ENCODE measurements at regions of chr5 and their contacts with region 1.

Region 1: DNA sequence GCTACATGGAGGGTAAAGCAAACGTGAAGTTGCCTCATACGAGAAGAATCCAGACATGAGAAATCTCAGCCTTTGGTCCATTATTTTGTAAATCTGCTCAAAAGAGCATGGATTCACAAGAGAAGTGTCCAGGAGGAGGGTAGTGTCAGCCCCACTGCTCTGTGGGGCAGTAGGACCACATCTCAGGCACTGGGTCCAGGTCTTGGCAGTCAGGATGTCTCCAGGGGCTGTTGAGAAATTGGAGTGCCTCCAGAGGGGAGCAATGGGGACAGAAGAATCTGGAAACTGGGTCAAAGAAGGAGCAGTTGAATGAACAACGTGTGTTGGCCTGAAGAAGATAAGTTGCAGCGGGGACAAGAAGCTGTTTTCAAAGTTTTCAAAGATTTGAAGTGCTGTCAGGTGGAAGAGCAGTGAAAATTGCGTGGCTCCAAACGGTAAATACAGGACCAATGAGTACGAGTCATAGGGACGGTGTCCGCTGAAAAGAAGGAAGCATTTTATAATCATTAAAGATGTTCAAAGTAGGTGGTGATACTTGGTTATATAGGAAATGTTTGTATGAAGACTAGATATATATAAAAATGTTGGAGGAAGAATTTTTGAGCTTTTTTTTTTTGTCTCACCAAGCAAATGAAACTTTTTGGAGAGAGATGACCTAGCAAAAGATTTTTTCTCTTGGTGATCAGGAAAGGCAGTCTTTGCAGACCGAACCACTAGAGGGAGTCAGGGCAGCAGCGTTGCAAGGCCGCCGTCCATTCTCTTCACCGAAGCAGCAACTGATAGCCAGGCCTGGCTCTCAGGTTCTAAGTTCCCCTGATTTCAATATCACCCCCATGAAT is 57.1 kb upstream of the ZBED3 start:
- DNase-seq: peak; percentile 55 to 70
- ATAC-seq: peak in 7 of 8 donors; percentile 73 to 85 (median 82)
- H3K4me3 ChIP-seq: no peak overlapping the region
- H3K27ac ChIP-seq: no peak overlapping the region
- H3K4me1 ChIP-seq: peaks cover 0 to 31% (median 0%) of the 10 kb centered on the region in 9 donors
- H3K27me3 ChIP-seq: no peaks in the 10 kb centered on the region
- CTCF ChIP-seq: peak; percentile 57 to 92 (median 84)

Region 2: DNA sequence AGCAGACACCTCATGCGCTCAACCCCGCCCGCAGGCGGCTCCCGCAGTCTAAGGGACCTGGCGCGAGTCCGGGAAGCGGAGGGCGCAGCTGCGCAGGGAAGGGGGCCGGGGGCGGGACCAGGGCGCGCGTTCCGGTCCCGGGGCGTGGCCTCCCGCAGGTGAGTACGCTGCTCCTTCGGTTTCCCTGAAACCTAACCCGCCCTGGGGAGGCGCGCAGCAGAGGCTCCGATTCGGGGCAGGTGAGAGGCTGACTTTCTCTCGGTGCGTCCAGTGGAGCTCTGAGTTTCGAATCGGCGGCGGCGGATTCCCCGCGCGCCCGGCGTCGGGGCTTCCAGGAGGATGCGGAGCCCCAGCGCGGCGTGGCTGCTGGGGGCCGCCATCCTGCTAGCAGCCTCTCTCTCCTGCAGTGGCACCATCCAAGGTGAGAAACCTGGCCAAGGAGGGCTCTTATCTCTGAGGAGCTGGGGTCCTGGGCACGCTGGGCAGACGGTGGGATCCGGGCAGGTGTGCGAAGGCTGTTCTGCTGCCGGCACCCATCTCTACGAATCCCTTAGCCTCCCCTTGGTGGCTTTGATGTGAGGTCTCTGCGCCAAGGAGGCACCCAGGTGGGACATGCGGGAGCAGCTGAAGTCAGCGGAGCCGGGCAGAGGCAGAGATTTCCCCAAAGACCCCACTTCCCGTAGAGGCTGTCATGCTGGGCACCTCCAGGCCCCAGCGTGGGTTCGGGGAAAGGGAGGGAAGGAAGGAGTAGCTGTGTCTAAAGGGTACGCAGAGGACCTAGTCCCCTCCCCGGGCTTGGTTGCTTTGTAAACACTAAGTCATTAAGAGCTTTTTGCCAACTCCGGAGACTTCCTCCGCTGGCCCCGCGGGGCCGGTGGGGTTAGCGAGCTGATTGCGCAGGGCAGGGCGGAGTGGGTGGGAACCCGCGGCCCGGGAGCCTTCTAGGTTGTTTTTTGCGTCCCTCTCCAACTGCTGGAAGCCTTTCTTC is 325.1 kb before region 1 on chr5 and contains the start of gene F2RL1:
- intact Hi-C with region 1: no loop called
- DNase-seq: peak; percentile 41 to 57
- ATAC-seq: peak; percentile 56 to 85 (median 75)
- H3K4me3 ChIP-seq: peak within 1 kb of the TSS; percentile 40 to 76 (median 60)
- H3K27ac ChIP-seq: peak within 1 kb of the TSS in 8 of 10 donors; percentile 45 to 89 (median 74)
- H3K4me1 ChIP-seq: peaks cover 0 to 23% (median 13%) of the 10 kb centered on the region in 9 donors
- H3K27me3 ChIP-seq: peaks cover 0 to 48% (median 34%) of the 10 kb centered on the region in 7 donors
- CTCF ChIP-seq: no peak
- total RNA-seq, gene F2RL1: 0.56 to 2.6 (median 0.91) TPM

Region 3: DNA sequence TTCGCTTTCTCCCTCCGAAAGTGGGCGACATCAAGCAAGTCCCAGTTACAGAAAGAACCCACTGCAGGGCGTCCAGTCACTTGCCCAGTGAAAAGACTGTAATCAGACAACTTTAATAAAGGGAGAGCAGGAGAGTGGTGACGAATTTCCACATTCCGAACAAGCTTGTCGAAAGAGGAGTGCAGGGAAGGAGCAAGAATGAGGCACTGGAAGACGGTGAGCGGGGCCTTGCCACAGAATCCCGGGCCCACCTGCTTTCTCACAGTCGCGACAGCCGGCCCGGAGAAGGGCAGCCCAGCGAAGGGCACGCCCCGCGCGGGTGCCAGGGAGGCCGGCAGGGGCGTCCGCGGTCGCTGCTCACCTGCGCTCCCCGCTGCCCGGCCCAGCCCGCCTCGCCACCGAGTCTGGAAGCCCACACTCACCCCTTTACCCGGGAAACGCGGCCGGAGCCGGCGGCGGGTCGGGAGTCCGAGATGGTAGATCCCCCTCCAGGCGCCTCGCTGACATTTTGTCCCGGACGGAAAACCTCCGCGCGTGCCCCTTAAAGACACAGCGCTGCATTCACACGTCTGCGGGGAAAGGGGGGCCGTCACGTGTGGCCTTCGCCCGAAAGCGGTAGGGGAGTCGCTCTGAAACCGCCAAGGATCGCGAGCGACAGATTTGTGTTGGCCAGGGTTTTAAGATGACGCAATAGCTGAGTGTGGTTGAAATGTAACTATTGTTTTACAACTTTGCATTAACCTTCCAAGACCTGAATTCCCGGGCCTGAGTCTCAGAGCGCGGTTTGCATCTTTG is 57.3 kb before region 1 on chr5 and contains the start of gene ZBED3:
- intact Hi-C with region 1: loop called in 1 of 10 experiments (anchors 5 kb)
- DNase-seq: peak; percentile 63 to 64
- ATAC-seq: peak; percentile 76 to 88 (median 81)
- H3K4me3 ChIP-seq: peak within 1 kb of the TSS; percentile 66 to 98 (median 82)
- H3K27ac ChIP-seq: peak within 1 kb of the TSS; percentile 86 to 98 (median 90)
- H3K4me1 ChIP-seq: peaks cover 2 to 21% (median 16%) of the 10 kb centered on the region in 9 donors
- H3K27me3 ChIP-seq: no peaks in the 10 kb centered on the region
- CTCF ChIP-seq: peak in 5 of 9 donors; percentile 5 to 30 (median 21)
- total RNA-seq, gene ZBED3: 4.8 to 8.9 (median 6.5) TPM

Region 4: GRCh38 chr5:77230721-77231470 is 86.7 kb after region 1 on chr5:
- intact Hi-C with region 1: loop called in 2 of 10 experiments (anchors 5 to 10 kb)
- DNase-seq: no peak
- ATAC-seq: no peak
- H3K4me3 ChIP-seq: no peak overlapping the region
- H3K27ac ChIP-seq: no peak overlapping the region
- H3K4me1 ChIP-seq: peaks cover 0 to 8% (median 0%) of the 10 kb centered on the region in 9 donors
- H3K27me3 ChIP-seq: peaks cover 0 to 4% (median 0%) of the 10 kb centered on the region in 7 donors
- CTCF ChIP-seq: no peak

Region 5: GRCh38 chr5:77239126-77239741 is 95.0 kb after region 1 on chr5:
- intact Hi-C with region 1: loop called in 5 of 10 experiments (anchors 1 to 10 kb)
- DNase-seq: no peak
- ATAC-seq: no peak
- H3K4me3 ChIP-seq: no peak overlapping the region
- H3K27ac ChIP-seq: no peak overlapping the region
- H3K4me1 ChIP-seq: peaks cover 0 to 4% (median 0%) of the 10 kb centered on the region in 9 donors
- H3K27me3 ChIP-seq: no peaks in the 10 kb centered on the region
- CTCF ChIP-seq: peak in 7 of 9 donors; percentile 19 to 45 (median 32)

Region 6: GRCh38 chr5:77437194-77437593 is 293.0 kb after region 1 on chr5:
- intact Hi-C with region 1: loop called in 3 of 10 experiments (anchors 10 kb)
- DNase-seq: no peak
- ATAC-seq: no peak
- H3K4me3 ChIP-seq: no peak overlapping the region
- H3K27ac ChIP-seq: no peak overlapping the region
- H3K4me1 ChIP-seq: no peaks in the 10 kb centered on the region
- H3K27me3 ChIP-seq: no peaks in the 10 kb centered on the region
- CTCF ChIP-seq: peak in 3 of 9 donors; percentile 20 to 41 (median 38)

Region 7: DNA sequence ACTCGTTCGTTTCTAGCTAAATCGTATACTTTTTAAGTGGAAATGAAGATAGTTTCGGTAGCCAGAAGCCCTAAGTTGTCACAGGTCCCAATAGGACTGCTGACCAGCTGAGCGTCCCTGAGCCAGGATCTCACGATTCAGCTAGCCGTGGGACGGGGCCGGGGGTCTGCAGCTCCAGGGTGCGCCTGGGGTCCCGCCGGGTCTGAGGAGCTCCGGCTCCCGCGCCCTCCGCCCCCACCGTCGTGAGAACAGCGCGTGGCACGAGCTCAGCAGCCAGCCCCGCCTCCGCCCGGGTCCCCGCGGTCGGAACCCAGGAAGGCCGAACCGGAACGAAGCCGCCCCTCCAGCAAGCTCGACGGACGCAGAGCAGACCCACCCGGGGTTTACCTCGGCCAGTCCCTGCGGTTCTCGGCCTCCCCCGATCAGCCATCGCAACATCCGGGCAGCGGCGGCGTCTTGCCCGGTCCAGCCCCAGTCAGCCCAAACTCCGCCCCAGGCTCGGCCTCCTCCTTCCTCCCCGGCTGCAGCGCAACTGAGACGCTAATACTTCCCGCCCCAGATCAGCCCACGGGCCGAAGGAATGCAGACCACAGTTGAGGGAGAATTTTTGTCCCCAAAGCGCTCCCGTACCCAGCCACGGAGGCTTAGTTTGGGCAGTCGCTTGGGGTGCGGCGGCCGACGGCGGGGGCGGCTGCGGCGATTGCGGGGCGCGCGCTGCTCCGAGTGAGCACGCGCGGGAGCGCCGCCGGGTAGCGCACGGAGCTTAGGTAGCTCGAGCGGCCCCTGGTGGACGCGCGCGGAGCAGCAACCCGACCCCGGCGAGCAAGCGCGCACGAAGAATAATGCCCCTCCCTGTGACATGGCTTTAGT is 347.8 kb after region 1 on chr5 and contains the start of gene WDR41:
- intact Hi-C with region 1: loop called (anchors 1 to 5 kb)
- DNase-seq: peak; percentile 92 to 95
- ATAC-seq: peak; percentile 97 to 98 (median 98)
- H3K4me3 ChIP-seq: peak within 1 kb of the TSS; percentile 57 to 90 (median 78)
- H3K27ac ChIP-seq: peak within 1 kb of the TSS; percentile 82 to 98 (median 95)
- H3K4me1 ChIP-seq: peaks cover 0 to 17% (median 9%) of the 10 kb centered on the region in 9 donors
- H3K27me3 ChIP-seq: peaks cover 0 to 5% (median 0%) of the 10 kb centered on the region in 7 donors
- CTCF ChIP-seq: peak; percentile 92 to 99 (median 95)
- total RNA-seq, gene WDR41: 21.4 to 44.9 (median 34.6) TPM